ENCODE measurements at regions of chr7 and their contacts with region 1.

Region 1: DNA sequence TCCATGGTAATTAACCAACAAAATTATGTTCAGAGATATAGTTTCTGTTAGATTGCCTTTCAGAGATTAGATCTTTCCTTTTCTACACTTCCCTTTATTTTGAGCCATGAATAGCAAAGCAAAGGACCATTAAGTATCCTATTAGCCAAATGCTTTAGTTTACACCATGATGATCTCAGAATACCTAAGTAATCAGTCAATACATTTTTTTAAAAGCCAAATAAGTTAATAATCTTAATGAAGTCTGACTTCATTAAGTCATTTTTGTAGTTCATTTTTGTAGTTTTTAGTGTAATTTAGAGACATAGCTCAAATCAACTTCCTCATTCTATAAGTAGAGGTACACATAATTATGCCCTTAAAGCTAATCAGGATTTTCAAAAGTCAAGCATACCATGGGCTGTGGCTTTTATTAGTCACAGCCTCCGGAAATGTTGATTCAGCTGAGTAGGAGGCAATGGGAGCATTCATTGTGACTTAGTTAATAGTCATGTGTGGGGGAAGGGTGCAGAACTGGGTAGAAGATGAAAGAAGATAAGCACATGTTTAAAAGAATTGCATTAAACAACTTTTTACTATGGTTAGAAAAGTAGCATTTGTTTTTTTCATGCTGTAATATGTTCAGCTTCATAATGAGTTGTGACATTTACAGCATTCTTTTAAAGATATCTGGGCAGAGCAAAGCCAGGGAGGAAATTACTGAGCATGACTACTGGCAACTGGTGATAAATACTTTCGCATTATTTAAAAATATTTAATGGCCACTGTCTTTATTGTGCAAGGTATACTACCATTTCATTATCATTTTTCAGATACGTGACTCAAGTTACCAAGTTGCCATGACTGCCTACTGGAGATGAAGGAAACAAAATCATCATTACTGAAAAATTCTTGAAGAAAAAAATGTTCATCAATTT is 57.3 kb upstream of the CCDC71L start:
- DNase-seq: peak; percentile 90
- ATAC-seq: peak; percentile 98
- H3K4me3 Mint-ChIP-seq: no peak overlapping the region
- H3K27ac Mint-ChIP-seq: no peak overlapping the region
- H3K4me1 Mint-ChIP-seq: peaks cover 13% of the 10 kb centered on the region
- H3K27me3 Mint-ChIP-seq: no peaks in the 10 kb centered on the region

Region 2: DNA sequence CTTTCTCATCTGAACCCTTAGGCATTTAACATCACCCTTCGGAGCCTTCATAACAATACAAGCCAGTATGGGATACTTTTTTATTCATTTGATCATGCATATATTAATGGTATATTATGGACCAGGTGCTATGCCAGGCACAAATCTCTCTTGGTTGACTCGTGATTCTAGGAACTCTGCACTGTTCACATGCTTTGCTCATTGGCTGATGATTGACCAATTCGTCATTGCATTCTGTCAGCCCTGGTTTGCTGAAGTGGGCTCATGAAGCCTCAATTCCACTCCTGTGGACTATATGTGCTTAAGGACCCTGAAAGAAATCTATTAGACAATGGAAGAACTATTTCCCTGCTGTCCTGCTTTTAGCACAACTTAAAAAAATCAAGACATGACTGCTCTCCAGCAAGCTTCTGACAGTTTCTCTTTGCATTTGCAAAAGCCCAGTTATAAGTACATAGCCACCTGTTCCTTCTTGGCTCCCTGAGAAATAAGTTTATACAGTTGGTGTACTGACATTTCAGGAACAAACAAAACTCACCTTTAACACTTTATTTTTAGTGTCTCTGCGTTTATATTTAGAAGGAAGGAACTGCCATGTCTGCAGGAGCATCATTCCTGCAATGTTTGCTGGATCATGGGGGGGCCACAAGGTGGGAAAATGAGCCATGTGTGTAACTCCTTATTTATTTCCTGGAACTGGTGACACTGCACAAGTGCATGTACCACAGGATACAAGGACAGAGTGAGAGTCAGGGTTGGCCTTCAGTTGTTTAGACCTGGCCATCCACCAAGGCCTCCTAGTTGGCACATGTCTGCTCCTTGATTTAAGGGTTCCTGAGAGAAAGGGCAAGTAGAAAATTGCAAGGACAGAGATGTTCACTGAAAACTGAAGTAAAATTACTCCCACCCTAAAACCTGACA is 287.4 kb before region 1 on chr7:
- CTCF ChIA-PET with region 1: no interaction called
- POLR2A ChIA-PET with region 1: no interaction called
- intact Hi-C with region 1: no loop called
- DNase-seq: no peak
- ATAC-seq: no peak
- H3K4me3 Mint-ChIP-seq: no peak overlapping the region
- H3K27ac Mint-ChIP-seq: no peak overlapping the region
- H3K4me1 Mint-ChIP-seq: peaks cover 54% of the 10 kb centered on the region
- H3K27me3 Mint-ChIP-seq: peaks cover 22% of the 10 kb centered on the region

Region 3: GRCh38 chr7:106598663-106599342 is 119.4 kb before region 1 on chr7:
- CTCF ChIA-PET with region 1: interaction called, 3 read pairs
- POLR2A ChIA-PET with region 1: no interaction called
- intact Hi-C with region 1: loop called in 1 of 2 experiments (anchors 5 kb)
- DNase-seq: peak; percentile 83
- ATAC-seq: peak; percentile 99
- H3K4me3 Mint-ChIP-seq: no peak overlapping the region
- H3K27ac Mint-ChIP-seq: no peak overlapping the region
- H3K4me1 Mint-ChIP-seq: peaks cover 2% of the 10 kb centered on the region
- H3K27me3 Mint-ChIP-seq: peaks cover 4% of the 10 kb centered on the region

Region 4: DNA sequence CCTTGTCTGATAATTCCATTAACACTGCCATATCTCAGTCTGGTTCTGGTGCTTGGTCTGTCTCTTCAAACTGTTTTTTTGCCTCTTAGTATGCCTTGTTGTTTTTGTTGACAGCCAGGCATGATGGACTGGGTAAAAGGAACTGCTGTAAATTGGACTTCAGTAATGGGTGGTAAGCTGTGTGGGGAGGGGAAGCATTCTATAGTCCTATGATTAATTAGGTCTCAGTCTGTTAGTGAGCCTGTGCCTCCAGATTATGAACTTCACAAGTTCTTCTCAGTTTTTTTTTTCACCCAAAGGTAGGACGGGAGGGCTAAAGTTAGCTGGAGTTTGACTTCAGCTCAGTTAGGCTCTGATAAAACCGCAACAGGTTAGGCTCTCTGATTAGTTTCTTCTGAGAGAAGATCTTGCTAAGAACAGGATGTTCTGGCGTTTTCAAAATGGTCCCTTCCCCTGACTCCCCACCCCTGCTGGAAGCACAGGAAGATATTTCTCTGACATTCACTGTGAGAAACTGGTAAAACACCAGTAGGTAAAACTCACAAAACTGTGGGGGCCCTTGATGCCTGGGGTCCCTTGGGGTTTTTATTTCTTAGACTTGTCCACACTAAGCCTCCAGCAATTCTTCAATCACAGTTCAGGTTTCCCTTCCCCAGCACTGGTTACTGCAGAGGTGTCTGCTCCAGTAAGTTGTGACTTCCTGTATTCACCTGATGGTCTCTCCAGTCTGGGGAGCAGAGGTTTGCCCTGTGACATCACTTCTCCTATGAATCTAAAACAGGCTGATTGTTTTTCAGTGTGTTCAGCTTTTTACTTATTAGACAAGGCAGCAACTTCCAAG is 14.0 kb before region 1 on chr7:
- CTCF ChIA-PET with region 1: interaction called, 5 read pairs
- POLR2A ChIA-PET with region 1: no interaction called
- intact Hi-C with region 1: loop called in 1 of 2 experiments (anchors 2 kb)
- DNase-seq: peak; percentile 22
- ATAC-seq: peak; percentile 88
- H3K4me3 Mint-ChIP-seq: no peak overlapping the region
- H3K27ac Mint-ChIP-seq: peak overlapping the region; percentile 79
- H3K4me1 Mint-ChIP-seq: peaks cover 17% of the 10 kb centered on the region
- H3K27me3 Mint-ChIP-seq: peaks cover 2% of the 10 kb centered on the region

Region 5: DNA sequence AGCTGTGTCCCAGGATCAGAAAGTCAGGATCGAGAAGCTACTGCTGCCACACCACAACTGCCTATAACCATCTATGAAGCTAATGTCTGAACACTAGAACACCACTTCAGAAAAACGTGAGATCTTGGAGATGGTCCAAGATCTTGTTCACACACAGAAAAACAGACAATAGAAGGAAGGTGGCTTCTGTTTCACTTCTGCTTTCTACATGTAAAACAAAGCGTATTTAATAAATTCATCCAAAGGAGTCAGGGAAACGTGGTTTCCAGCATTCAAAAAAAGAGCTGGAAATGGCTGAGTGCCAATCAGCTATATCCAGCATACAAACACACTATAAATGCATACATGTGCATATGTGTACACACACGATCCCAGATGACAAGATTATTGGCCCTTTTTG is 13.0 kb after region 1 on chr7:
- CTCF ChIA-PET with region 1: interaction called, 45 read pairs
- POLR2A ChIA-PET with region 1: no interaction called
- intact Hi-C with region 1: loop called in 1 of 2 experiments (anchors 2 kb)
- DNase-seq: no peak
- ATAC-seq: no peak
- H3K4me3 Mint-ChIP-seq: no peak overlapping the region
- H3K27ac Mint-ChIP-seq: no peak overlapping the region
- H3K4me1 Mint-ChIP-seq: peaks cover 47% of the 10 kb centered on the region
- H3K27me3 Mint-ChIP-seq: no peaks in the 10 kb centered on the region

Region 6: DNA sequence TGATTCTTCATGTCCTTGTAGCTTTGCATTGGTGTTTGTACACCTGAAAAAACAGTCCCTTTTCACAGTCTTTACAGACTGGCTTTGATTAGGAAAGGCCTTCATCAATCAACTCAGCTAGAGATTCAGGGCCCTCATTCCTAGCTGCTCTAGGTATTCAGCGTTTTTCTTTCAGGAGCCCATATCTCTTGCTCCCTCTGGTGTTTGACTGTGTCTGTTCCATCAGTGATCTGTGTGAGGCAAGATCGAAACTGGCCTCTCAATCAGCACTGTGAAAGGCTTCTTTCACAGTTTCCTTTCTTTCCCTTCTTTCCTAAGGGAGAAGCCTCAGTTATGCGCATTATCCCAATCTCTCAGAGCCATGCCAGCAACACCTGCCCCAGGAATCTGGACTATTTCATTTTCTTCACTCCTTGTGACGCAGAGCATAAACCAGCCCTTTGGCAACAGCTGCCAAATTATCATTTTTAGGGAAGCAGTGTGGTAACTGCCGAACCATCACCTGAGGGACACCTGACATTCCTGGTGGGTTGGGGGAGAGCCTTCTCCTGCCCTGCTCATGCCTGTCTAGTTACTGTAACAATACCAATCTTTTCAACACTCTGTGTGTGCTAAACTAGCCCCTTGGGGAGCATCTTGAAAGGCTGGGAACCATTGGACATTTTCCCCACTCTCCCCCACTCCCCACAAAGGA is 18.4 kb after region 1 on chr7:
- CTCF ChIA-PET with region 1: interaction called, 45 read pairs
- POLR2A ChIA-PET with region 1: no interaction called
- intact Hi-C with region 1: loop called in 1 of 2 experiments (anchors 2 kb)
- DNase-seq: peak; percentile 60
- ATAC-seq: peak; percentile 95
- H3K4me3 Mint-ChIP-seq: no peak overlapping the region
- H3K27ac Mint-ChIP-seq: peak overlapping the region; percentile 75
- H3K4me1 Mint-ChIP-seq: peaks cover 37% of the 10 kb centered on the region
- H3K27me3 Mint-ChIP-seq: no peaks in the 10 kb centered on the region

Region 7: GRCh38 chr7:106772655-106773108 is 54.5 kb after region 1 on chr7:
- CTCF ChIA-PET with region 1: interaction called, 3 read pairs
- POLR2A ChIA-PET with region 1: no interaction called
- intact Hi-C with region 1: loop called (anchors 1 kb)
- DNase-seq: no peak
- ATAC-seq: peak; percentile 79
- H3K4me3 Mint-ChIP-seq: peak overlapping the region; percentile 27
- H3K27ac Mint-ChIP-seq: peak overlapping the region; percentile 91
- H3K4me1 Mint-ChIP-seq: peaks cover 66% of the 10 kb centered on the region
- H3K27me3 Mint-ChIP-seq: no peaks in the 10 kb centered on the region

Region 8: DNA sequence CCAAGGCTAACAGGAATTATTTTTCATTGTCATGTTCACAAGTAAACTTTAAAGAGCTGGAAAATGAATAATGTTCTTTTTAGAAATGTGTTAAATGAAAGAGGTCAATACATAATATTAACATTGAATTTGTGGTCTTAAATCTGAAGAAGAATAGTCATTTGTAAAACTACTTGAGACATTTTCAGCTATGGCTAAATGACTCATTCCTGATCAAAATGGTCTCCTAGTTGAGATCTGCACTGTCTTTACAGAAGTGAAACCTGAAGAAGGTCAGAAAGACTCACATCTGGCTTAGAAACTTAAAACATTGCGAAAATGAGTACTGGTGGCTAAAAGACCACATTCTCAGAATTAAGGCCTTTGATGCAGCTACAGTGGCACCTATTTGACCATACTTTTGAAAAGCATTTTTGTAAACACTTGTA is 152.8 kb after region 1 on chr7:
- CTCF ChIA-PET with region 1: no interaction called
- POLR2A ChIA-PET with region 1: no interaction called
- intact Hi-C with region 1: loop called in 1 of 2 experiments (anchors 2 kb)
- DNase-seq: no peak
- ATAC-seq: peak; percentile 82
- H3K4me3 Mint-ChIP-seq: no peak overlapping the region
- H3K27ac Mint-ChIP-seq: no peak overlapping the region
- H3K4me1 Mint-ChIP-seq: peaks cover 72% of the 10 kb centered on the region
- H3K27me3 Mint-ChIP-seq: no peaks in the 10 kb centered on the region